ENCODE measurements at regions of chr7 and their contacts with region 1.

Region 1: DNA sequence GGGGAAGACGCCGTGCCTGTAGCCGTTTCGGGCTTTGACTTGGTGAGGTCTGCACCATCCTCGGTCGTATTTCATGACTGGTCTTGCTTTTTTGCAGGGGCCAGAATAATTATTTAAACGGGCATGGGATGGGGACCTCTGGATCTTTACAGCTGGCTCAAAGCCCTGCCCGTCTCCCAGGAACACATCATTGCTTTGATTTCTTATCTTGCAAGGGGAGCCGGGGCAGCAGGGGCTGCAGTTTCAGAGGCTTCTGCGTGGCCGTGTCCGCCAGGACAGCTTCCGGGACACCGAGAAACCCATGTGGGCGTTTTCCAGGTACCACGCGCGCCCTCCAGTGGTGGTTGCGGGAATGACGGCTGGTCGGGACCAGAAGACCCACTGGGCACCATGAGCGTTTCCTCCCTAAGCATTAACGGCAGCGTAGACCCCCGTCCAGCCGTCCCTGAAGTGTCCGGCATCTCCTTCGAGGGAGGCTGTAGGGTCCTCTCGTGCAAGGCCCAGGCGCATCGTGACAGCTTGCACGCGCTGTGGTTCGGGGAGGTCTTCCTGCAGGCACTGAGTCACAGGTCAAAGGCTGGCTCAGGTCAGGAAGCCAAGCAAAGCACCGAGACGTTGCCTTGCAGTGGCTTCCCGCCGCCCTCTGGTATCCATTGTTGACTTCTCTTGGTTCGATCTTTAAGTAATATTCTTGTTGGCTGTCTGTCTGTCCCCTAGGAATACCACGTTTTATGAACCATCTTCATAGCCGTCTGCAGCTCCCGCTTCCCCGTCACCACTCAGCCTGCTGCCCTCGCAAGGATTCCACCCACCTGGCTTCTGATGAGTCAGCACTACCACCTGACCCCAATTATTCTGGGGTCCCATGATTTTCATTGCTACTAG is 16.2 kb upstream of the ZFAND2A start:
- DNase-seq: peak in 1 of 2 experiments; percentile 100
- H3K4me3 ChIP-seq: peak overlapping the region in 1 of 4 experiments; percentile 35; a peak in 1 of 8 replicates
- H3K27ac ChIP-seq: no peak overlapping the region
- H3K4me1 ChIP-seq: no peaks in the 10 kb centered on the region; a peak in 2 of 7 replicates
- H3K27me3 ChIP-seq: no peaks in the 10 kb centered on the region; a peak in 2 of 7 replicates
- CTCF ChIP-seq: peak in 2 of 3 experiments; percentile 89 to 92; a peak in 3 of 4 replicates
- EP300 ChIP-seq: no peak
- POLR2A ChIP-seq: no peak
- RAD21 ChIP-seq: peak; percentile 68 to 76

Region 2: GRCh38 chr7:1137510-1138167 is 38.6 kb before region 1 on chr7:
- CTCF ChIA-PET with region 1: interaction called, 17 read pairs
- POLR2A ChIA-PET with region 1: no interaction called
- DNase-seq: no peak
- H3K4me3 ChIP-seq: peak overlapping the region; percentile 50 to 76 (median 67)
- H3K27ac ChIP-seq: no peak overlapping the region
- H3K4me1 ChIP-seq: peaks cover 0 to 6% (median 2%) of the 10 kb centered on the region in 4 experiments; a peak in 4 of 7 replicates
- H3K27me3 ChIP-seq: no peaks in the 10 kb centered on the region
- CTCF ChIP-seq: no peak
- EP300 ChIP-seq: no peak
- POLR2A ChIP-seq: no peak
- RAD21 ChIP-seq: no peak

Region 3: GRCh38 chr7:1187127-1187526 is 10.9 kb after region 1 on chr7:
- CTCF ChIA-PET with region 1: interaction called, 32 read pairs
- POLR2A ChIA-PET with region 1: no interaction called
- DNase-seq: no peak
- H3K4me3 ChIP-seq: no peak overlapping the region
- H3K27ac ChIP-seq: no peak overlapping the region
- H3K4me1 ChIP-seq: no peaks in the 10 kb centered on the region
- H3K27me3 ChIP-seq: no peaks in the 10 kb centered on the region; a peak in 1 of 7 replicates
- CTCF ChIP-seq: no peak
- EP300 ChIP-seq: no peak
- POLR2A ChIP-seq: no peak
- RAD21 ChIP-seq: no peak

Region 4: GRCh38 chr7:1193593-1194424 is 17.6 kb after region 1 on chr7:
- CTCF ChIA-PET with region 1: interaction called, 32 read pairs
- POLR2A ChIA-PET with region 1: no interaction called
- DNase-seq: peak in 1 of 2 experiments; percentile 78
- H3K4me3 ChIP-seq: no peak overlapping the region
- H3K27ac ChIP-seq: no peak overlapping the region
- H3K4me1 ChIP-seq: no peaks in the 10 kb centered on the region
- H3K27me3 ChIP-seq: no peaks in the 10 kb centered on the region
- CTCF ChIP-seq: peak; percentile 75 to 82 (median 76)
- EP300 ChIP-seq: no peak
- POLR2A ChIP-seq: no peak
- RAD21 ChIP-seq: peak; percentile 88 to 89

Measured in H1 (cell line).